ENCODE measurements at regions of chr6 and their contacts with region 1.

Region 1: GRCh38 chr6:137271245-137272183 is 52.3 kb upstream of the IFNGR1 start:
- DNase-seq: peak in 1 of 2 experiments; percentile 50
- H3K4me3 ChIP-seq: no peak overlapping the region
- H3K4me3 Mint-ChIP-seq: no peak overlapping the region
- H3K27ac Mint-ChIP-seq: no peak overlapping the region
- H3K4me1 ChIP-seq: peaks cover 4% of the 10 kb centered on the region; the same call in 1 of the 2 replicates
- H3K4me1 Mint-ChIP-seq: no peaks in the 10 kb centered on the region
- H3K27me3 ChIP-seq: no peaks in the 10 kb centered on the region
- H3K27me3 Mint-ChIP-seq: no peaks in the 10 kb centered on the region
- CTCF ChIP-seq: peak; percentile 76 to 88

Region 2: DNA sequence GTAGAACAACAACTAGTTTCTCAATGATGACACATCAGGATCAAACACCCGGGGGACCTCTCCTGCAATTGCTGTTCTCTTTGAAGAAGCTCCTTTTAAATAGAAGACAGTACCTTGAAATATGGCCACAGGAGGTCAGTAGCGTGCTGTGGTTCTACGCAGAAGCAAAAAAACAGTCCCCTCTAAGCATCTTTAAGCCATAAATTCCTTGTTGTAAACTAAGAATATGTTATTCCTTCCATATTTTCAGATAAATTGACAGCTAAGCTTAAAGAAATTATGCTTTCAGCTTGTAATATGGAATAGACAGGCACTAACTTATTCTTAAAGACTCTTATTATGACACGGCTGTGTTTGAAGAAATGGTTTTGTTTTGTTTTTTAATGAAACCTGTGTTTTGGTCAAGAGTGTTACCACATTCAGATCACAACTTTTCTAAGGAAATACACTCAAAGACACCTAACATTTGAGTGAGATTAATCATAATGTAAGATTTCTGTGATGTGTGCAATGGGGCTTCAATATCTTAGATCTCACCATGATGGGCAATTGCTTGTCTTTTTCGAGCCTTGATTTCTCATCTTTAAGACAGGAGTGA is 177.0 kb before region 1 on chr6:
- CTCF ChIA-PET with region 1: interaction called, 5 read pairs
- POLR2A ChIA-PET with region 1: no interaction called
- intact Hi-C with region 1: loop called (anchors 2 kb)
- DNase-seq: peak; percentile 60 to 71
- H3K4me3 ChIP-seq: no peak overlapping the region
- H3K4me3 Mint-ChIP-seq: no peak overlapping the region
- H3K27ac Mint-ChIP-seq: no peak overlapping the region
- H3K4me1 ChIP-seq: peaks cover 6% of the 10 kb centered on the region; the same call in 1 of the 2 replicates
- H3K4me1 Mint-ChIP-seq: no peaks in the 10 kb centered on the region
- H3K27me3 ChIP-seq: no peaks in the 10 kb centered on the region
- H3K27me3 Mint-ChIP-seq: no peaks in the 10 kb centered on the region
- CTCF ChIP-seq: peak; percentile 69 to 79

Region 3: DNA sequence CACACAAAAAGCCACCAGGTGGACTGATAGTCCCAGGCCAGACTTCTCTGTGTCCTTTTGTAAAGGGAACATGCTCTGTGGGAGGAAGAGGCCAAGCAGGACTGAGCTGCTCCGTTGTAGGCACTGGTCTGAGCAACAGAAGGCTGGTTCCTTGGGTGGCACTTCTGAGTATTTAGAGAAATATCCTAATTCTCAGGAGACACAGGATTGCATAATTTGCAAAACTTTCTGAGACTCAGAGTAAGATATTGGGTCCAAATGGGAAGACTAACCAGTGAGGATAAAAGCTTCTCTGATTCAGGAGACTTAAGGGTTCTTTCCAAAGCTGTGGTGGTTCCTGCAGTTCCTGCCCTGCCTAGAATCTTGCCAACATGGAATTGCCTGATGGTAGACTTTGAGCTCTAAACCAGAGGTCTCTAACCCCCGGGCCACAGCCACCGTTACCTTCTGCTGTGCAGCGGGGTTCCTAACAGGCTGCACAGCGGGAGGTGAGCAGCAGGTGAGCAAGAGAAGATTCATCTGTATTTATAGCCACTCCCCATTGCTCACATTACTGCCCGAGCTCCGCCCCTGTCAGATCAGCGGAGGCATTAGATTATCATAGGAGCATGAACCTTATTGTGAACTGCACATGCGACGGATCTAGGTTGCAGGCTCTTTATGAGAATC is 115.7 kb after region 1 on chr6:
- CTCF ChIA-PET with region 1: no interaction called
- POLR2A ChIA-PET with region 1: no interaction called
- intact Hi-C with region 1: no loop called
- DNase-seq: no peak
- H3K4me3 ChIP-seq: no peak overlapping the region
- H3K4me3 Mint-ChIP-seq: no peak overlapping the region
- H3K27ac Mint-ChIP-seq: no peak overlapping the region
- H3K4me1 ChIP-seq: no peaks in the 10 kb centered on the region
- H3K4me1 Mint-ChIP-seq: no peaks in the 10 kb centered on the region
- H3K27me3 ChIP-seq: no peaks in the 10 kb centered on the region
- H3K27me3 Mint-ChIP-seq: no peaks in the 10 kb centered on the region
- CTCF ChIP-seq: no peak

Region 4: DNA sequence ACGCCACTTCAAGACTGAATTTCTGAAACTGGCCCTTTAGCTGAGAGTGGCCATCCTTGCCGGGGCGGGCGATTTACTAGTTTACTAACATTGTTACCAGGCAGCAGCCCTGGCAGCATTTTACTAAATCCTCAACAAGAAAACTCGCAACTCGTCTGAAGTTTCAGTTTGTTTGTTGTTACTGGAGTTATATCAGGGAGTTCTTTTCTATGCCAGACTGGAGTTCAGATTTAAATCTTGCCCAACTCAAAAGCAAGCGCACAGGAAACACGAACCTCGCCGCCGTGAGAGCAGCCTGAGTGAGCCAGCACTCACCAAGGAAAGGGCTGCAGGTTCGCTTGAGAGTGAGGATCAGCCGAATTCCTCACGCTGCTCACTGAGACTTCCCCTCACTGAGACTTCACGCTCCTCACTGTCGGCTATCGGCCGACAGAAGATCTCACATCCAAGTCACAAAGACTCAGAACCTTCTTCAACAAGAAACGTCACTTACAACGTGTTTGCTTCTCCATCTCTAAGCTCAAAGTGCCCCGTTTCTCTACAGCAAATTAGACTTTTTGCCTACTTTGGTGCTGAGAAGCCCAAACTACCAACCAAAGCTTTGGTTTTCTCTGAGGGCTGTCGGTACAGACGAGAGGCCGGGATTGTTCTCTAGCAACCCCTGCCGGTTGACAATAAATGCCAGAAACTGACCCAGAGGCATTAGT is 143.8 kb after region 1 on chr6:
- CTCF ChIA-PET with region 1: no interaction called
- POLR2A ChIA-PET with region 1: no interaction called
- intact Hi-C with region 1: loop called (anchors 1 kb)
- DNase-seq: peak; percentile 39 to 57
- H3K4me3 ChIP-seq: peak overlapping the region; percentile 2; the same call in 1 of the 2 replicates
- H3K4me3 Mint-ChIP-seq: peak overlapping the region; percentile 70
- H3K27ac Mint-ChIP-seq: no peak overlapping the region
- H3K4me1 ChIP-seq: no peaks in the 10 kb centered on the region
- H3K4me1 Mint-ChIP-seq: no peaks in the 10 kb centered on the region
- H3K27me3 ChIP-seq: no peaks in the 10 kb centered on the region
- H3K27me3 Mint-ChIP-seq: no peaks in the 10 kb centered on the region
- CTCF ChIP-seq: peak in 1 of 2 experiments; percentile 43

Region 5: GRCh38 chr6:137641474-137642077 is 370.1 kb after region 1 on chr6:
- CTCF ChIA-PET with region 1: interaction called, 3 read pairs
- POLR2A ChIA-PET with region 1: no interaction called
- intact Hi-C with region 1: loop called (anchors 1 kb)
- DNase-seq: peak; percentile 67 to 69
- H3K4me3 ChIP-seq: no peak overlapping the region
- H3K4me3 Mint-ChIP-seq: no peak overlapping the region
- H3K27ac Mint-ChIP-seq: no peak overlapping the region
- H3K4me1 ChIP-seq: peaks cover 20% of the 10 kb centered on the region
- H3K4me1 Mint-ChIP-seq: peaks cover 4% of the 10 kb centered on the region
- H3K27me3 ChIP-seq: no peaks in the 10 kb centered on the region
- H3K27me3 Mint-ChIP-seq: no peaks in the 10 kb centered on the region
- CTCF ChIP-seq: peak; percentile 65 to 74

Region 6: GRCh38 chr6:138001750-138002349 is 730.3 kb after region 1 on chr6:
- CTCF ChIA-PET with region 1: no interaction called
- POLR2A ChIA-PET with region 1: no interaction called
- intact Hi-C with region 1: loop called (anchors 10 kb)
- DNase-seq: peak; percentile 53 to 69
- H3K4me3 ChIP-seq: no peak overlapping the region
- H3K4me3 Mint-ChIP-seq: no peak overlapping the region
- H3K27ac Mint-ChIP-seq: no peak overlapping the region
- H3K4me1 ChIP-seq: peaks cover 2% of the 10 kb centered on the region; the same call in 1 of the 2 replicates
- H3K4me1 Mint-ChIP-seq: peaks cover 9% of the 10 kb centered on the region
- H3K27me3 ChIP-seq: no peaks in the 10 kb centered on the region
- H3K27me3 Mint-ChIP-seq: no peaks in the 10 kb centered on the region
- CTCF ChIP-seq: peak; percentile 87